ENCODE measurements at regions of chr5 and their contacts with region 1.

Region 1: DNA sequence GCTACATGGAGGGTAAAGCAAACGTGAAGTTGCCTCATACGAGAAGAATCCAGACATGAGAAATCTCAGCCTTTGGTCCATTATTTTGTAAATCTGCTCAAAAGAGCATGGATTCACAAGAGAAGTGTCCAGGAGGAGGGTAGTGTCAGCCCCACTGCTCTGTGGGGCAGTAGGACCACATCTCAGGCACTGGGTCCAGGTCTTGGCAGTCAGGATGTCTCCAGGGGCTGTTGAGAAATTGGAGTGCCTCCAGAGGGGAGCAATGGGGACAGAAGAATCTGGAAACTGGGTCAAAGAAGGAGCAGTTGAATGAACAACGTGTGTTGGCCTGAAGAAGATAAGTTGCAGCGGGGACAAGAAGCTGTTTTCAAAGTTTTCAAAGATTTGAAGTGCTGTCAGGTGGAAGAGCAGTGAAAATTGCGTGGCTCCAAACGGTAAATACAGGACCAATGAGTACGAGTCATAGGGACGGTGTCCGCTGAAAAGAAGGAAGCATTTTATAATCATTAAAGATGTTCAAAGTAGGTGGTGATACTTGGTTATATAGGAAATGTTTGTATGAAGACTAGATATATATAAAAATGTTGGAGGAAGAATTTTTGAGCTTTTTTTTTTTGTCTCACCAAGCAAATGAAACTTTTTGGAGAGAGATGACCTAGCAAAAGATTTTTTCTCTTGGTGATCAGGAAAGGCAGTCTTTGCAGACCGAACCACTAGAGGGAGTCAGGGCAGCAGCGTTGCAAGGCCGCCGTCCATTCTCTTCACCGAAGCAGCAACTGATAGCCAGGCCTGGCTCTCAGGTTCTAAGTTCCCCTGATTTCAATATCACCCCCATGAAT is 57.1 kb upstream of the ZBED3 start:
- DNase-seq: peak; percentile 75
- H3K4me3 Mint-ChIP-seq: no peak overlapping the region
- H3K27ac Mint-ChIP-seq: no peak overlapping the region
- H3K4me1 Mint-ChIP-seq: peaks cover 24% of the 10 kb centered on the region
- H3K27me3 Mint-ChIP-seq: peaks cover 5% of the 10 kb centered on the region

Region 2: DNA sequence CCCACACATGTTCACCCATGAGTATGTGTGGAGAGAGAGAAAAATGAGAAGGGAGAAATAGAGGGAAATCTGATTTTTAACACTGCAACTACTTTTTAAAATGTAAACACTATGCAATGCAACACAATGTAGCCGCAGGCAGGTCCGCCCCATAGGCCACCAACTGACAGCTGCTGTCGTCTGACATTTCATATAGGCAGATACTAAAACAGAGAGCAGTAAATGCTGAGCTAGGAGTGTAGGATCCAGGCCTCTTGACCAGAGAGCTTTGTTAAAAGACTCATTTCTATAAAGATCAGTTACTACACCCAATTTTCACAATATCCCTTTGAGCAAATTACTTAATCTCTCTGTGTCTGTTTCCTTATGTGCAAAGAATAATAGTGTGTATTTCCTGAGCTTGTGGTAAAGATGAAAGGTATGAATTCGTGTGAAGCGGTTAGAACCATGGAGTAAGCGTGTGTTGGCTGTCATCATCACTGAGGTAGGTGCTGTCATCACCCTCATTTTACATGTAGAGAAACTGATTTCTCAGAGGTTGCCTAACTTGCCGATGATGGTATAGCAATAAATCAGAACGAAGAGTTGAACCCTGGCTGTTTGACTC is 11.1 kb after region 1 on chr5:
- CTCF ChIA-PET with region 1: interaction called, 12 read pairs
- POLR2A ChIA-PET with region 1: interaction called, 3 read pairs
- intact Hi-C with region 1: no loop called
- DNase-seq: peak; percentile 36
- H3K4me3 Mint-ChIP-seq: no peak overlapping the region
- H3K27ac Mint-ChIP-seq: no peak overlapping the region
- H3K4me1 Mint-ChIP-seq: peaks cover 24% of the 10 kb centered on the region
- H3K27me3 Mint-ChIP-seq: no peaks in the 10 kb centered on the region

Region 3: DNA sequence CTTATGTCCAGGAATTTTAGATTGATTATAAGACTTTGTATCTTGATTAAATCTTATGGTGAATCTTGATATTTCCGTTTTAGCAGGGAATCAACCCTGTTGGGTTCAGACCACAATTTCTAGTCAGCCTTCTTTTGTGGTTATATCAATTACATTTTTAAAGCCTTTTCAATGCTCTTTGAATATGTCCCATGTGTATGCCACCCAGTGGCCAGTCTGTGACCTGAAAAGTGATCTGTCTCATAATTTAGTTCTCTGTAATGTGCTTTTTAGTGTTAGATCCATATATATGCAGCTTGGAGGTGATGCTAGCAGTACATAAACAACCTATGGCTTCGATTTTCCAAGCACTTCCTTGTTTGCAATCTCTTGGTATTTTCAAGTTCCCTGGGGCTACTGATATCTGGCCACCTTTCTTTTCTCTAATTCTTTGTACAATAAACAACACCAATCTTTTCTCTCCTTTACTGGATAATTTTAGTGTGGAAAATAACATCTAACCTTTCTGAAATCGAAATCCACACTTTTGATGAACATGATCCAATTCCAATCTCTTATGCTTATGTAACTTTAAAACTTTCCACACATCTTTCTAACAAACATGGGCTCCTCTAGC is 95.0 kb after region 1 on chr5:
- CTCF ChIA-PET with region 1: no interaction called
- POLR2A ChIA-PET with region 1: no interaction called
- intact Hi-C with region 1: loop called (anchors 10 kb)
- DNase-seq: no peak
- H3K4me3 Mint-ChIP-seq: no peak overlapping the region
- H3K27ac Mint-ChIP-seq: no peak overlapping the region
- H3K4me1 Mint-ChIP-seq: no peaks in the 10 kb centered on the region
- H3K27me3 Mint-ChIP-seq: peaks cover 9% of the 10 kb centered on the region

Region 4: GRCh38 chr5:77437194-77437593 is 293.0 kb after region 1 on chr5:
- CTCF ChIA-PET with region 1: interaction called, 13 read pairs
- POLR2A ChIA-PET with region 1: no interaction called
- intact Hi-C with region 1: loop called (anchors 5 kb)
- DNase-seq: no peak
- H3K4me3 Mint-ChIP-seq: no peak overlapping the region
- H3K27ac Mint-ChIP-seq: no peak overlapping the region
- H3K4me1 Mint-ChIP-seq: no peaks in the 10 kb centered on the region
- H3K27me3 Mint-ChIP-seq: no peaks in the 10 kb centered on the region

Measured in activated CD4-positive, alpha-beta memory T cell treated with anti-CD3 and anti-CD28 coated beads for 36 hours (primary cell).